AG04449 (cell line): ENCODE measurements at regions of chr17 and their contacts with region 1.

Region 1: GRCh38 chr17:1648963-1649843 is 463 bp downstream of the RILP start:
- DNase-seq: peak; percentile 67
- H3K4me3 ChIP-seq: peak overlapping the region; percentile 66
- CTCF ChIP-seq: peak; percentile 97

Region 2: DNA sequence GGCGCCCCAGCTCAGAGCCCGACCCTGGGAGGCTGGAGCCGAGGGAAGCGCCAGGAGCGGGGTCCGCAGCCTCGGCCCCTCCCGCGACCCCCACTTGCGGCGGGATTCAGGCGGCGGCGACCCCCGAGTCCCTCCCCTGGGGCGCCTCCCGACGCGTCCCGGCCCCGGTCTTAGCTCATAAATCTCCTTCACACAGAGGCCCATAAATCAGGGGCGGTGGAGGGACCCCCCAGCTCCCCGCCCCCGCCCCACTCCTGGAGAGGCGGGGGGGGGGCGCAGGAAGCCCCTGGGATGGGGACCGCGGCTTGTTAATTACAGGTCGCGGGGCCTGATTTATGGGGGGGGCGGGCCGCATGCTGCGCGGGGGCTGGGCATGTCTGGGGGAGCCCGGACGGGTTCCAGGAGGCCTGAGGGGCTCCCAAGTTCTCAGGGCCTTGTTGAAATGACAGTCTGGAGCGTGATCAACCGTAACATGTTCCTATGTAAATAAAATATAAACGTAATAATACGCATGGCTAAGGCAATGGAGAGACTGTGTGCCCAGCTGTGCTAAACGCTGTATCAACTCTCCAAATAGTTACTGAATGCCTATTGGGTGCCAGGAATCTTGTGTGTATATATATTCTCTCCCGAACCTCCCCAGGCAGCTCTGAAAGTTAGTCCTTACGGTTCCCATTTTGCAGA is 389.0 kb before region 1 on chr17:
- CTCF ChIA-PET with region 1: interaction called, 20 read pairs
- POLR2A ChIA-PET with region 1: no interaction called
- DNase-seq: no peak
- H3K4me3 ChIP-seq: peak overlapping the region; percentile 66
- CTCF ChIP-seq: no peak

Region 3: DNA sequence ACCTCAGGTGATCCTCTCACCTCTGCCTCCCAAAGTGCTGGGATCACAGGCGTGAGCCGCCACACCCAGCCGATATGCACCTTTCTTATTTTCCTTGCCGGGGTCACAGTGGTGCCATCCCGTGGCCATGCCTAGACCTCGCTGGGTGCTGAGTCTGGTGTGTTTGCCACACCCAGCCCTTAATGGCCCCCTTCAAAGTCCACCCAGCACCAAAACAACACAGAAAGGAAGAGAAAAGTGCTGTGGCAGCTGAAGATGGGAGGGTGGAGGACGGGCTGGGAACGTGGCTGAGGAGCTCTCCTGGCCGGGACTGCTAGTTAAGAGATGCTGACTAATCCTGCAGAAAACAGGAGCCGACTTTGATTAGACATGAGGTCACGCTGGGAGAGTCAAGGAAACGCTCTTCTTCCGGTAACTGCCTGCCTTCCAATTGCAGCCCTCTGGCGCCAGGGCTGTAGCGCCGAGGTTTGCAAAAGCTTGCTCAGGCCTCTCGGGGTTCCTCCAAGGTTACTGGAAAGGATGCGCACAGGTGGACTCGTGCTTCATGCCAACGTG is 31.5 kb before region 1 on chr17:
- CTCF ChIA-PET with region 1: interaction called, 14 read pairs
- POLR2A ChIA-PET with region 1: no interaction called
- DNase-seq: peak; percentile 29
- H3K4me3 ChIP-seq: no peak overlapping the region
- CTCF ChIP-seq: no peak

Region 4: GRCh38 chr17:1673041-1673785 is 24.0 kb after region 1 on chr17:
- CTCF ChIA-PET with region 1: interaction called, 92 read pairs
- POLR2A ChIA-PET with region 1: no interaction called
- DNase-seq: no peak
- H3K4me3 ChIP-seq: no peak overlapping the region
- CTCF ChIP-seq: no peak

Region 5: DNA sequence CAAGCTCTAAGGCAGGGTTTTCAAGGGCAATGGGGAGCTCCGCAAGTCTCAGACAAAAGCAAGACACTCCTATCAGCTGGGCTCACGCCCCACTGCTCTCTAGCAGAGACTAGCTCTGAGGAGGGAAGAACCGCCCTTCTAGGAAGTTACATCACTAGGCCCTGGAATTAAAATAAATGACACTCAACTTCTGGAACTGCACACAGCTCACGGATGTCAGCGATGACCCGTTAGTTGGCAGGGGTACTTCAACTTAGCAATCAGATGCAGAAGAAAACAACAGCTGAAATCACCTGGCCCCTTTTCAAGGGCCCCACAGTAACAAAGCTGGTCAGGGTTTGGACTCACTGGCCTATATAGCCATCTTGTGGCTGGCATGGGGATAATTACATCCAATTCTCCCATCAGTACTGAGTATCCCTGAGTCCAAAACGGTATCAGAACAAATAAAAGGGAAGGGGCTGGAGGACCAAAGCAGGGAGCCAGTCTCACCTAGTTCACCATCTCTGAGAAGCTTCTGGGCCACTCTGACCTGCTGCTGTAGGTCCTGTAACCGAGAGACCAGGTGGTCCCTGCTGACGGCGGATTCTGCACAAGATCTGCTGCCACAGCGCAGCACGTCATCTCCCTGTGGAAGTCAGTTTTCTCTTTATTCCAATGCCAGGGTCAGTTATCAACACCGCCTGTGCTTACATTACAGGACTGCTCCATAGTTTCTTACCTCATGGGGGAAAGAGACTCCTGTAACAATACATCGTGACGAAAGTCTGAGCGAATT is 134.8 kb after region 1 on chr17:
- CTCF ChIA-PET with region 1: interaction called, 18 read pairs
- POLR2A ChIA-PET with region 1: no interaction called
- DNase-seq: no peak
- H3K4me3 ChIP-seq: no peak overlapping the region
- CTCF ChIP-seq: peak; percentile 67